ENCODE measurements at regions of chr2 and their contacts with region 1.

Region 1: DNA sequence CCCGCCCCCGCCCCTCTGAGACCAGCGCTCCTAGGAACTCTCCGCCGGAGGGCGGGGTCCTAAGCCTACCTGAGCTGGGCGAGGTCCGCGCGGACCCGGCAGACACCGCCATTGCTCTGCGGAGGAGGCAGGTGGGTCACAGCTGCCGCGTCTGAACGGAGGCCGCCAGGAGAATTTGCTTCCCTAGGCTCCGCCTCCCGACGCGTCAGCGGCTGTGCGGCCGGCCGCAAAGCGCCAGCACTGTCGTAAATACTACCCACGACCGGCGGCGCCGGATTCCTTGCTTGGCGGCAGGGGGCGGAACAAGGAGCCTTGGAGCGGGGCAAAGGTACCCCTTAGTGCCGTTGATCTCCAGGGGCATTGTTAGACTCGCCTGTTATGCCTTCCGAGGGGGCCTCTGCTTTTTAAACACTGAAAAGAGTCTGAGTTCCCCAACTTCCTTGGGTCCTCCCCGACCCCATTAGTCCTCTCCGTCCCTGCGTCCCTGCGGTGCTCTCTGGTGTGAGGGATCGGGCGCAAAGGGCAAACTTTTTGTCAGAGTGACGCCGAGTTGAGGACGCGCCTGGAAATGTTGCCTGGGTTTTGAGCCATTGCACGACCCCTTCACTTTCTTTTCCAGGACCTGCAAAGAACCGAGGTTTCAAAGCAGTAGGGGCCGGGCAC is at the start of gene GGCX:
- DNase-seq: peak; percentile 96
- H3K4me3 ChIP-seq: peak within 1 kb of the TSS; percentile 69 to 82 (median 72)
- H3K27ac ChIP-seq: peak within 1 kb of the TSS; percentile 44
- H3K4me1 ChIP-seq: peaks cover 9% of the 10 kb centered on the region
- H3K27me3 ChIP-seq: no peaks in the 10 kb centered on the region
- CTCF ChIP-seq: peak in 1 of 2 donors; percentile 5
- POLR2A ChIP-seq: peak; percentile 95
- total RNA-seq, gene GGCX: 44.5 and 48.0 TPM in 2 replicates

Region 2: DNA sequence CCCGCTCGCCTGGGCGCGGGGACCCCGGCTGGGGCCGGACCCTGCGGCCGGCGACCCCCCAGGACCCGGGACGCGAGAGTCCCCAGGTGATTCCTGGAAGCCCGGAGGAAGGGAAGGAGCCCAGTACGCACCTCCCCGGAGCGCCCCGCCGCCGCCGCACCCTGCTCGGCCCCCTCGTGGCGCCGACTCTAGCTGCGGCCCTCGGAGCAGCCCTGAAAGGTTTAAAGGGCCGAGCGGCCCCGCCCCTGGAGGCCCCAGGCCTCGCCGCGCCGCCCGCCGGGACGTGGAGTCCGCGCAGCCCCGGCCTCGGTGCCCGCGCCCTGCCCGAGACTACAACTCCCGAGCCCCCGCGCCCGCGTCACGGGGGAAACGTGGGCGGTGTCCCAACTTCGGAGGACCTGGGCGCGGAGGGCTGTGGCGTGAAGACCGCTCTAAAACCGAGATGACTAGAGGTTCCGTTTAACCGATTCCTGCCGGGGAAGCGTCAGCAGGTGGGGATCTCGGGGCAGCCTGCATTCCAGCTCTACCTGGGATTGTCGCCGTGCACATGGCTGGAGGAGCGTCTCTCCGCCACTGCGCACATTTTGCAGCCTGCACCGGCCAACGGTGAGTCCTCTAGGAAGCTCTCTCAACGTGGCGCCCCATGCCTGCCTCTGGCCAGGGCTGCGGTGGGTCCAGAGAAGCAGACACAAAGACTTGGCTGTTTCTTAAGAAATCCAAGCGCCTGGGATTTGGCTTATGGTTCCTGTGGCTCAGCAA is 41.2 kb after region 1 on chr2 and contains the start of gene TMEM150A:
- CTCF ChIA-PET with region 1: interaction called, 4 read pairs
- POLR2A ChIA-PET with region 1: interaction called, 3 read pairs
- dilution Hi-C with region 1: no loop called
- intact Hi-C with region 1: loop called (anchors 1 kb)
- DNase-seq: peak; percentile 88
- H3K4me3 ChIP-seq: peak within 1 kb of the TSS; percentile 64 to 98 (median 65)
- H3K27ac ChIP-seq: peak within 1 kb of the TSS; percentile 23
- H3K4me1 ChIP-seq: peaks cover 24% of the 10 kb centered on the region
- H3K27me3 ChIP-seq: no peaks in the 10 kb centered on the region
- CTCF ChIP-seq: peak; percentile 32 to 51
- POLR2A ChIP-seq: peak; percentile 87
- total RNA-seq, gene TMEM150A: 14.6 and 17.7 TPM in 2 replicates

Region 3: DNA sequence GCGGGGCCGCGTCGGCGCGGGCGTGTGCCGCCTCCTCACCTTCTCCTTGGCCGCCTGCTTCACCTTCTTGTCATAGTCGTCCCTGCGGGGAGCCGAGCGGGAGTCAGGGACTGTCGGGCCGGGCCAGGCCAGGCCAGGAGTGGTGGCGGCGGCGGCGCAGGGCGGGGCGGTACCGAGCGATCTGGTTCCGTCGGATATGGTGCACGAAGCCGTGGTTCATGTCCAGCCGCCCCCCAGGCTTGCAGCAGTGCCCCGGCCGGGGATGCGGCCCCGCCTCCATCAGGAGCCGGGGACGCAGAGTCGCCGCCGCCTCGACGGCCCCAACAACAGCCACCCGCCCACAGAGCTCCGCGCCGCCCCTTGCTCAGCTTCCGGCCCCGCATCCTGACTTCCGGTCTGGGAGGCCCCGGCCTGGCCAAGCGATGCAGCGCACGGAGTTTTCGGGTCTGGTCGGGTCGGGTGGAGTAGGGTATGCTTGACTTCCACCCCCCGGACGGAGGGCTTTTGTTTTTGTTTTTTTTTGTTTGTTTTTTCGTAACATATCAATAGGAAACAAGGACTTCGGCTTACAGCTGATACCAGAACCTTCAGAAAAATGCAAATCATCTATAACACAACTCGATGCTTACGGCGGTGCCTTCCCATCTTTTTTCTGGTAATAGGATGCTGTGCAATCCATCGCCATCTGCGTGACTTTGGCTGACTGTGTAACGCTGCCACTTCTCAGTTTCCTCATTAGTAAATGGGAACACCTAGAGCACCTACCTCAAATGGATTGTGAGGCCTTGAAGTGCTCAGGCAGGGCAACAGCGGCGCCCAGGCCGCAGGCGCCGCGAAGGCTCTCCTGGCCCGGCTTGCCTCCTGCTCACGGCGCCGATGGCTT is 50.5 kb after region 1 on chr2 and contains the start of gene C2orf68:
- CTCF ChIA-PET with region 1: no interaction called
- POLR2A ChIA-PET with region 1: interaction called, 4 read pairs
- dilution Hi-C with region 1: no loop called
- intact Hi-C with region 1: loop called (anchors 1 kb)
- DNase-seq: peak; percentile 79
- H3K4me3 ChIP-seq: peak within 1 kb of the TSS; percentile 77 to 98 (median 91)
- H3K27ac ChIP-seq: peak within 1 kb of the TSS; percentile 61
- H3K4me1 ChIP-seq: peaks cover 14% of the 10 kb centered on the region
- H3K27me3 ChIP-seq: no peaks in the 10 kb centered on the region
- CTCF ChIP-seq: no peak
- POLR2A ChIP-seq: peak; percentile 93
- total RNA-seq, gene C2orf68: 23.0 and 27.4 TPM in 2 replicates